CD4-positive, alpha-beta memory T cell (primary cell): ENCODE measurements at regions of chr3 and their contacts with region 1.

Region 1: DNA sequence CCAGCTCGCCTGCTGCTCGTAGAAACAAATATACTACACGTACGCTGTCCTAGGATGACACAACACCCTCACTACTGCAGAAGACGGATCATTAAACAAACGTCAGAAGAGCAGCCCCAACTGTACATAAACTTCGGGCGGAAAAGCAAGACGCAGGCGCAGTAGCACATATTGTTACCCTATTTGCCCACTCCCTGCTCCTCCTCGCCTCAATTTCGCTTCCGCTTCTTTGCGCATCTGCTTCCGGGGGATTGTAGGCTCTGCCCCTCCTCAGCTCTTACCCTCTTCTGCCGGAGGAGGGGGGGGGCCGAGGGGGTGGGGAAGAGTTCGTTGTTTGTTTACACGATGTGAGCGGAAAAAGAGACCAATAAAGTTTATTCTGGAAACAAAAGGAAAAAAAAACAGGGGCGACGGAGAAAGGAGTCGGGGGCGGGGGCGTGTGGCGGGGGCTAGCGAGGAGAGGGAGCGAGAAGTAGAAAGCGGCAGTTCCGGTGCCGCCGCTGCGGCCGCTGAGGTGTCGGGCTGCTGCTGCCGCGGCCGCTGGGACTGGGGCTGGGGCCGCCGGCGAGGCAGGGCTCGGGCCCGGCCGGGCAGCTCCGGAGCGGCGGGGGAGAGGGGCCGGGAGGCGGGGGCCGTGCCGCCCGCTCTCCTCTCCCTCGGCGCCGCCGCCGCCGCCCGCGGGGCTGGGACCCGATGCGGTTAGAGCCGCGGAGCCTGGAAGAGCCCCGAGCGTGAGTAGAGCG is at the start of gene PIK3CA:
- DNase-seq: peak; percentile 92 to 99 (median 97)
- H3K4me3 ChIP-seq: peak within 1 kb of the TSS; percentile 72 to 91
- H3K4me3 Mint-ChIP-seq: peak within 1 kb of the TSS; percentile 96 to 100 (median 98)
- H3K27ac ChIP-seq: peak within 1 kb of the TSS; percentile 89
- H3K27ac Mint-ChIP-seq: peak within 1 kb of the TSS in 6 of 7 donors; percentile 96 to 99 (median 98)
- H3K4me1 ChIP-seq: peaks cover 40% of the 10 kb centered on the region
- H3K4me1 Mint-ChIP-seq: peaks cover 26 to 41% (median 31%) of the 10 kb centered on the region in 4 donors
- H3K27me3 ChIP-seq: no peaks in the 10 kb centered on the region
- H3K27me3 Mint-ChIP-seq: no peaks in the 10 kb centered on the region
- total RNA-seq, gene PIK3CA: 45.5 to 47.2 TPM

Region 2: GRCh38 chr3:179071550-179072397 is 76.3 kb before region 1 on chr3 and contains the start of gene ZMAT3:
- CTCF ChIA-PET with region 1: interaction called, 25 read pairs
- POLR2A ChIA-PET with region 1: interaction called, 43 read pairs
- intact Hi-C with region 1: loop called (anchors 1 kb)
- DNase-seq: peak; percentile 84 to 91 (median 86)
- H3K4me3 ChIP-seq: peak within 1 kb of the TSS; percentile 79 to 81
- H3K4me3 Mint-ChIP-seq: peak within 1 kb of the TSS; percentile 94 to 98 (median 97)
- H3K27ac ChIP-seq: peak within 1 kb of the TSS; percentile 77
- H3K27ac Mint-ChIP-seq: peak within 1 kb of the TSS; percentile 93 to 98 (median 95)
- H3K4me1 ChIP-seq: peaks cover 53% of the 10 kb centered on the region
- H3K4me1 Mint-ChIP-seq: peaks cover 41 to 67% (median 56%) of the 10 kb centered on the region in 4 donors
- H3K27me3 ChIP-seq: no peaks in the 10 kb centered on the region
- H3K27me3 Mint-ChIP-seq: no peaks in the 10 kb centered on the region
- total RNA-seq, gene ZMAT3: 18.5 to 20.0 TPM

Region 3: DNA sequence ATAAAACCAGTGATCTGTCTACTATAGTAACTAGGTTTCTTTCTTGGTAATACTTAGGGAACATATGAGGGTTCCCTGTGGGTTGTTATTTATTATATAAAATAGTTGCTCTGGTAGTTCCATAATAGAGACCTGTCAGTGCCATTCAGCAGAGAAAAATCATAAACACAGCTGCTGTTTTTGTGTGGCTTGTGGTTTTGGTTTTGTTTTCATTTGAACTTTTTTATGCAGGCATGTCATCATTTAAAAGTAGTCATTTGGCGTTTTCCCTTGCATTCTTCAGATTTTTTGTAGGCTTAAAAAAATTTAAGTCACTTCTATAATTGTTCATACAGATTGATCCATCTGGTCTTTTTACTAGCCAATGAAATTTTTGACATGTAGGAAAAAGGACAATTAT is 48.1 kb after region 1 on chr3:
- CTCF ChIA-PET with region 1: interaction called, 14 read pairs
- POLR2A ChIA-PET with region 1: interaction called, 21 read pairs
- intact Hi-C with region 1: loop called (anchors 1 kb)
- DNase-seq: peak; percentile 48 to 69 (median 57)
- H3K4me3 ChIP-seq: no peak overlapping the region
- H3K4me3 Mint-ChIP-seq: peak overlapping the region in 5 of 8 donors; percentile 17 to 73 (median 59)
- H3K27ac ChIP-seq: no peak overlapping the region
- H3K27ac Mint-ChIP-seq: peak overlapping the region in 5 of 7 donors; percentile 37 to 70 (median 56)
- H3K4me1 ChIP-seq: peaks cover 29% of the 10 kb centered on the region
- H3K4me1 Mint-ChIP-seq: peaks cover 39 to 62% (median 52%) of the 10 kb centered on the region in 4 donors
- H3K27me3 ChIP-seq: no peaks in the 10 kb centered on the region
- H3K27me3 Mint-ChIP-seq: no peaks in the 10 kb centered on the region

Region 4: DNA sequence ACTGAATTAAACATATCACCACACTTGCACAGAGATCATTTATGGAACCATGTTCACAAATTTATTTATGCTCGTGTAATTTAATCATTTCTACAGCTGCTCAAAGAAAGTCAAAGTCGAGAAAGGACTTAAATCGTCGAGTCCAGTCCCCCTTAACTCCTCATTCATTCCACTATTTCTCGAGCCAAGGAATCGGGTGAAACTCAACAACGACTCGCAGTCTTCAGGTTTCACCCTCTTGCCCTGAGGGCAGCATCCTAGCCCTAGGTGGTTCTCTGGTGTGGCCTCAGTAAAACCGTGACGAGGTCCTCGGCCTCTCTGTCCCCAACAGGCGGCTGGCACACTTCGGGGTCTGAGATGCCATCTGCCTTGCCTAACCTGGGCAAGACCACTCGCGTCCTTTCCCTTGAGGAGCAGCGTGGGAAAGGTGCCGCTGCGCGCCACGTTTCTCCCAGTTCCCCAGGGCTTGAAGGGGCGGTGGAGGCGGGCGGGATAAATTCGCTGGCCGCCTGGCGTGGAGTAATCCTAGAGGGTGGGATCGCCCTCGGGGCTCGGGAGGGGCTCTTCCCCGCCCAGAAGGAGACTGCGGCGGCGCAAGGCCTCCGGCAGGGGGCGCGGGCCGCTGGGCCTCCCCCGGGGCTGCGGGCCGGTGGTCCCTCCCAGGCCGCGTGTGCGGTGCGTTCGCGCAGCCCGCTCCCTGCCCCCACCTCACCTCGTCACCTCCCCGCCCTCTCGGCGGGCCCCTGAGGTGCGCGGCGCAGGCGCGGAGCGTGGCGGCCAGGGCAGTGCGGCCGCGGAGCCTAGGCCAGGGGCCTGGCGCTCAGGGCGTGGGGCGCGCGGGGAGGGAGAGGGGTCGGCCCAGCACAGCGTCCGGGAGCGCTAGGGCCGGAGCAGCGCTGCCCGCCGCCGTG is 174.5 kb after region 1 on chr3 and contains the start of gene ZNF639:
- CTCF ChIA-PET with region 1: interaction called, 88 read pairs
- POLR2A ChIA-PET with region 1: interaction called, 45 read pairs
- intact Hi-C with region 1: loop called (anchors 1 kb)
- DNase-seq: peak; percentile 83 to 88 (median 87)
- H3K4me3 ChIP-seq: peak within 1 kb of the TSS; percentile 70 to 83
- H3K4me3 Mint-ChIP-seq: peak within 1 kb of the TSS; percentile 90 to 96 (median 92)
- H3K27ac ChIP-seq: peak within 1 kb of the TSS; percentile 98
- H3K27ac Mint-ChIP-seq: peak within 1 kb of the TSS; percentile 87 to 97 (median 97)
- H3K4me1 ChIP-seq: peaks cover 32% of the 10 kb centered on the region
- H3K4me1 Mint-ChIP-seq: peaks cover 25 to 39% (median 31%) of the 10 kb centered on the region in 4 donors
- H3K27me3 ChIP-seq: no peaks in the 10 kb centered on the region
- H3K27me3 Mint-ChIP-seq: no peaks in the 10 kb centered on the region
- total RNA-seq, gene ZNF639: 43.2 to 45.6 TPM

Region 5: GRCh38 chr3:179604321-179605078 is 456.5 kb after region 1 on chr3 and contains the starts of genes MRPL47 and NDUFB5:
- CTCF ChIA-PET with region 1: no interaction called
- POLR2A ChIA-PET with region 1: interaction called, 12 read pairs
- intact Hi-C with region 1: loop called (anchors 1 kb)
- DNase-seq: peak; percentile 89 to 97 (median 92)
- H3K4me3 ChIP-seq: peak within 1 kb of the TSS; percentile 82 to 97
- H3K4me3 Mint-ChIP-seq: peak within 1 kb of the TSS; percentile 98 to 99 (median 99)
- H3K27ac ChIP-seq: peak within 1 kb of the TSS; percentile 97
- H3K27ac Mint-ChIP-seq: peak within 1 kb of the TSS; percentile 97 to 100 (median 99)
- H3K4me1 ChIP-seq: peaks cover 37% of the 10 kb centered on the region
- H3K4me1 Mint-ChIP-seq: peaks cover 23 to 56% (median 38%) of the 10 kb centered on the region in 4 donors
- H3K27me3 ChIP-seq: no peaks in the 10 kb centered on the region
- H3K27me3 Mint-ChIP-seq: no peaks in the 10 kb centered on the region
- total RNA-seq, gene MRPL47: 16.9 to 17.3 TPM
- total RNA-seq, gene NDUFB5: 55.7 to 63.6 TPM

Region 6: GRCh38 chr3:180912304-180913296 is 1764.6 kb after region 1 on chr3 and contains the start of gene FXR1:
- CTCF ChIA-PET with region 1: no interaction called
- POLR2A ChIA-PET with region 1: no interaction called
- intact Hi-C with region 1: loop called (anchors 2 kb)
- DNase-seq: peak; percentile 89 to 91 (median 90)
- H3K4me3 ChIP-seq: peak within 1 kb of the TSS; percentile 77 to 98
- H3K4me3 Mint-ChIP-seq: peak within 1 kb of the TSS; percentile 91 to 97 (median 96)
- H3K27ac ChIP-seq: peak within 1 kb of the TSS; percentile 98
- H3K27ac Mint-ChIP-seq: peak within 1 kb of the TSS; percentile 95 to 99 (median 98)
- H3K4me1 ChIP-seq: peaks cover 51% of the 10 kb centered on the region
- H3K4me1 Mint-ChIP-seq: peaks cover 38 to 69% (median 55%) of the 10 kb centered on the region in 4 donors
- H3K27me3 ChIP-seq: no peaks in the 10 kb centered on the region
- H3K27me3 Mint-ChIP-seq: no peaks in the 10 kb centered on the region
- total RNA-seq, gene FXR1: 131 TPM